ENCODE measurements at regions of chr1 and their contacts with region 1.

Region 1: GRCh38 chr1:209839875-209840491 is 12.2 kb downstream of the UTP25 start:
- DNase-seq: peak; percentile 17
- ATAC-seq: peak; percentile 72
- H3K4me3 Mint-ChIP-seq: no peak overlapping the region
- H3K27ac Mint-ChIP-seq: peak overlapping the region; percentile 73
- H3K4me1 Mint-ChIP-seq: peaks cover 36% of the 10 kb centered on the region
- H3K27me3 Mint-ChIP-seq: no peaks in the 10 kb centered on the region
- CTCF ChIP-seq: no peak

Region 2: GRCh38 chr1:209850342-209850979 is 10.5 kb after region 1 on chr1:
- CTCF ChIA-PET with region 1: interaction called, 3 read pairs
- POLR2A ChIA-PET with region 1: interaction called, 11 read pairs
- intact Hi-C with region 1: no loop called
- DNase-seq: peak; percentile 54
- ATAC-seq: no peak
- H3K4me3 Mint-ChIP-seq: no peak overlapping the region
- H3K27ac Mint-ChIP-seq: peak overlapping the region; percentile 57
- H3K4me1 Mint-ChIP-seq: no peaks in the 10 kb centered on the region
- H3K27me3 Mint-ChIP-seq: no peaks in the 10 kb centered on the region
- CTCF ChIP-seq: peak; percentile 33

Measured in activated CD8-positive, alpha-beta T cell treated with anti-CD3 and anti-CD28 coated beads for 36 hours (primary cell).